ENCODE measurements at regions of chr14 and their contacts with region 1.

Region 1: DNA sequence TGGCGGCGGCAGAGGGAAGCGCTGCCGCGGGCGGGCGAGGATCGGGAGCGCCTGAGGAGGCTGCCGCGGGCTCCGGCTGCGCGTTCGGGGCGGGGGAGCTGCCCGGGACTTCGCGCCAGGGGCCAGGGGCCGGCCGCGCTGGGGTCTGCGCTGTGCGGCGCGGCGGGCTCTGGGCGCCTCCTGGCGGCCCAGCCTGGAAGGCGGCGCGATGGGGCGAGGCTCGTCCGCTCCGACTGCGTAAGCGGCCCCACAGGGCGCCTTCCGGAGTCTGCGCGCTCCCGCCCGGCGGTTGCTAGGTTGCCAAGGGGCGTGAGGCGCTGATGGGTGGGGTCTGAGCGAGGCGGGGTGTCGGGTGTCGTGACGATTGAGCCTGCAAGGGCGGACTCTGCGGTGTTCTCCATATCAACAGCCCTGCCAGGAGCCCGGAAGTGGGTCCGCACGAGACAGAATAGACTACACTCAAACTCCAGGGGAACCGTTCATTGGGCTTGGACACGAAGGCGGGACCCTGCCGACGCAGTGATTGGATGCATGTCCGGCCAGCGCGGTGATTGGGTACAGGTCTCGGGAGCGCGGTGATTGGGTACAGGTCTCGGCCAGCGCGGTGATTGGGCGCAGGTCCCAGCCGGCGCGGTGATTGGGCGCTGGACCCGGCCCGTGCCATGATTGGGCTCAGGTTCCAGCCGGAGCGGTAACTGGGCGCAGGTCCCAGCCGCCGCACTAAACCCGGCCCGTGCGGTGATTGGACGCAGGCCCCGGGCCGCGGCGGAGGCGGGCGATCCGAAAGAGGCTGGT is at the start of gene TEDC1:
- DNase-seq: peak; percentile 98 to 100 (median 98)
- ATAC-seq: peak; percentile 66
- H3K4me3 ChIP-seq: peak within 1 kb of the TSS; percentile 97
- H3K4me3 Mint-ChIP-seq: peak within 1 kb of the TSS; percentile 89
- H3K27ac ChIP-seq: peak within 1 kb of the TSS; percentile 88 to 95
- H3K27ac Mint-ChIP-seq: peak within 1 kb of the TSS; percentile 97
- H3K4me1 ChIP-seq: peaks cover 51% of the 10 kb centered on the region
- H3K4me1 Mint-ChIP-seq: peaks cover 21% of the 10 kb centered on the region
- H3K27me3 ChIP-seq: no peaks in the 10 kb centered on the region
- H3K27me3 Mint-ChIP-seq: no peaks in the 10 kb centered on the region
- CTCF ChIP-seq: peak; percentile 61
- total RNA-seq, gene TEDC1: 102 to 108 TPM

Region 2: GRCh38 chr14:104800015-104800770 is 690.6 kb before region 1 on chr14:
- CTCF ChIA-PET with region 1: no interaction called
- POLR2A ChIA-PET with region 1: interaction called, 4 read pairs
- intact Hi-C with region 1: loop called in 1 of 2 experiments (anchors 10 kb)
- DNase-seq: peak; percentile 59 to 94 (median 84)
- ATAC-seq: peak; percentile 63
- H3K4me3 ChIP-seq: peak overlapping the region; percentile 55
- H3K4me3 Mint-ChIP-seq: peak overlapping the region; percentile 79
- H3K27ac ChIP-seq: peak overlapping the region; percentile 50 to 82
- H3K27ac Mint-ChIP-seq: peak overlapping the region; percentile 71
- H3K4me1 ChIP-seq: peaks cover 55% of the 10 kb centered on the region
- H3K4me1 Mint-ChIP-seq: peaks cover 36% of the 10 kb centered on the region
- H3K27me3 ChIP-seq: no peaks in the 10 kb centered on the region
- H3K27me3 Mint-ChIP-seq: no peaks in the 10 kb centered on the region
- CTCF ChIP-seq: peak; percentile 10

Region 3: DNA sequence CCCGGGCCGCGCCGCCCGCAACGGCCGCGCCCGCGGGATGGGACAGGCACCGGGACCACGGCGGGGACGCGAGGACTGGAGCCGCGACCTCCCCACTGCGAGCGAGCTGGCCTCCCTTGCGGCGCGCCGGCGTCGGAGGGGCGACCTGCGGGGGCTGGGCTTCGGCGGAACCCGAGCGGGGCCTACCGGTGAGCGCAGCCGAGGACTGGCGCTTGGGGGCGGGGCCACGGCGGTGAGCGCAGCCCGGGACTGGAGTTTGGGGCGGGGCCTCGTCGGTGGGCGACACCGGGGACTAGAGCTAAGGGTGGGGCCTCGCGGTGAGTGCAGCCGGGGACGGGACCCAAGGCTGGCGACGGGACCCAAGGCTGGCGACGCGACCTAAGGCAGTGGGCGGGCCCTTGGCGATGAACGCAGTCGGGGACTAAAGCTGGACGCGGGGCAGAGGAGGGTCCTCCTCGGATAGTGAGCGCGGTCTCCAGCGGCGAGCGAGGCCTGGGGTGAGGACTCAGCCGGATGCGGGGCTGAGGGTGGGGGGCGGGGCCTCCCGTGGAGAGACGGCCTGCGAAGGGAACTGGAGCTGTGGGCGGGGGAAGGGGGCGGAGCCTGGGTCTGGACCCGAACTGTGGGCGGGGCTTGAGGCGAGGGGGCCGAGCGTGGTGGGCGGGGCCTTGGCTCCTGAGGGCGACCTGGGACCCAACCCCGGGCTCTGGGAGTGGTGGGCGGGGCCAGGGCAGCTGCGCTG is 189.8 kb before region 1 on chr14 and contains the start of gene BRF1:
- CTCF ChIA-PET with region 1: no interaction called
- POLR2A ChIA-PET with region 1: interaction called, 15 read pairs
- intact Hi-C with region 1: no loop called
- DNase-seq: peak; percentile 95 to 100 (median 98)
- ATAC-seq: peak; percentile 88
- H3K4me3 ChIP-seq: peak within 1 kb of the TSS; percentile 71
- H3K4me3 Mint-ChIP-seq: peak within 1 kb of the TSS; percentile 98
- H3K27ac ChIP-seq: peak within 1 kb of the TSS; percentile 79 to 88
- H3K27ac Mint-ChIP-seq: peak within 1 kb of the TSS; percentile 85
- H3K4me1 ChIP-seq: peaks cover 37% of the 10 kb centered on the region
- H3K4me1 Mint-ChIP-seq: peaks cover 46% of the 10 kb centered on the region
- H3K27me3 ChIP-seq: no peaks in the 10 kb centered on the region
- H3K27me3 Mint-ChIP-seq: no peaks in the 10 kb centered on the region
- CTCF ChIP-seq: no peak
- total RNA-seq, gene BRF1: 77.4 to 77.7 TPM

Region 4: GRCh38 chr14:105369653-105370040 is 121.1 kb before region 1 on chr14:
- CTCF ChIA-PET with region 1: interaction called, 40 read pairs
- POLR2A ChIA-PET with region 1: interaction called, 30 read pairs
- intact Hi-C with region 1: loop called in 1 of 2 experiments (anchors 1 kb)
- DNase-seq: no peak
- ATAC-seq: no peak
- H3K4me3 ChIP-seq: no peak overlapping the region
- H3K4me3 Mint-ChIP-seq: no peak overlapping the region
- H3K27ac ChIP-seq: no peak overlapping the region
- H3K27ac Mint-ChIP-seq: no peak overlapping the region
- H3K4me1 ChIP-seq: peaks cover 11% of the 10 kb centered on the region
- H3K4me1 Mint-ChIP-seq: peaks cover 6% of the 10 kb centered on the region
- H3K27me3 ChIP-seq: no peaks in the 10 kb centered on the region
- H3K27me3 Mint-ChIP-seq: no peaks in the 10 kb centered on the region
- CTCF ChIP-seq: no peak

Region 5: DNA sequence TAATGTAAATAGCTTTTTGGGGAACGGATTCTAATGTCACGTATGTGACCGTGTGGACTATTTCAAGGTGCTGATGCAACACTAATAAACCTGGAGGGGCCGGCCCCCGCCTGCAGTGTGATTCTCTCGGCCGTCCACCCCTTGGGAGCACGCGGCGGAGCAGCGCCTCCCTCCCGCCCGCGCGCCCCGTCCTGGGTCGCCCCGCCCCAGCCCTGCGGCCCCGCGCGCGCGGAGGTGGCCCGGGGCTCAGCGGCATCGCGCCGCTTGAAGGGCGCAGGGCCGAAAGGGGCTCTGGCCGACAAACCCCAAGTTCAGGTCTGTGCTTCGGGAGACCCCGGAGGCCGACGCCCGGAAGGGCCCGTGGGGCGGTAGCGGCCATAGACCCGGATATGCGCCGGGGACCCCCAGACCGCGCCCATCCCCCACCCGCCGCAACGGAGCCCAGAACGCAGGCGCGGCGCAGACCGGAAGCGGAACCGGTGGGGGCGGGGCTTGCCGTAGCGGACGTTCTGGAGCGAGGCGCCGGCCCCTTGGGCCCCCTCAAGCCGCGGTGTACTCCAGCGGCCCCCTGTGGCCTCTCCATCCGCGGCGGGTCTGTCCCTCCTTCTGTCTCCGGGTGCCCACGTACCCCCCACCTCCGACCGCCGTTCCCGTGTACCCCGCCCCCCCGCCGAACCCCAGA is 92.6 kb before region 1 on chr14 and contains the start of gene TEX22:
- CTCF ChIA-PET with region 1: interaction called, 5 read pairs
- POLR2A ChIA-PET with region 1: interaction called, 16 read pairs
- intact Hi-C with region 1: loop called in 1 of 2 experiments (anchors 5 kb)
- DNase-seq: peak; percentile 75 to 94 (median 86)
- ATAC-seq: peak; percentile 91
- H3K4me3 ChIP-seq: peak within 1 kb of the TSS; percentile 71
- H3K4me3 Mint-ChIP-seq: peak within 1 kb of the TSS; percentile 80
- H3K27ac ChIP-seq: peak within 1 kb of the TSS; percentile 44 to 65
- H3K27ac Mint-ChIP-seq: peak within 1 kb of the TSS; percentile 72
- H3K4me1 ChIP-seq: peaks cover 30% of the 10 kb centered on the region
- H3K4me1 Mint-ChIP-seq: peaks cover 16% of the 10 kb centered on the region
- H3K27me3 ChIP-seq: no peaks in the 10 kb centered on the region
- H3K27me3 Mint-ChIP-seq: no peaks in the 10 kb centered on the region
- CTCF ChIP-seq: no peak
- total RNA-seq, gene TEX22: 1.3 to 2.8 TPM

Region 6: GRCh38 chr14:105448706-105449111 is 42.1 kb before region 1 on chr14:
- CTCF ChIA-PET with region 1: interaction called, 29 read pairs
- POLR2A ChIA-PET with region 1: interaction called, 14 read pairs
- intact Hi-C with region 1: loop called (anchors 1 kb)
- DNase-seq: peak; percentile 55 to 82 (median 65)
- ATAC-seq: peak; percentile 100
- H3K4me3 ChIP-seq: no peak overlapping the region
- H3K4me3 Mint-ChIP-seq: no peak overlapping the region
- H3K27ac ChIP-seq: no peak overlapping the region
- H3K27ac Mint-ChIP-seq: no peak overlapping the region
- H3K4me1 ChIP-seq: peaks cover 7% of the 10 kb centered on the region
- H3K4me1 Mint-ChIP-seq: no peaks in the 10 kb centered on the region
- H3K27me3 ChIP-seq: no peaks in the 10 kb centered on the region
- H3K27me3 Mint-ChIP-seq: no peaks in the 10 kb centered on the region
- CTCF ChIP-seq: peak; percentile 75

Region 7: GRCh38 chr14:105527661-105528581 is 37.2 kb after region 1 on chr14:
- CTCF ChIA-PET with region 1: interaction called, 10 read pairs
- POLR2A ChIA-PET with region 1: interaction called, 10 read pairs
- intact Hi-C with region 1: loop called (anchors 1 to 2 kb)
- DNase-seq: peak; percentile 63 to 92 (median 77)
- ATAC-seq: peak; percentile 65
- H3K4me3 ChIP-seq: peak overlapping the region; percentile 47
- H3K4me3 Mint-ChIP-seq: peak overlapping the region; percentile 87
- H3K27ac ChIP-seq: no peak overlapping the region
- H3K27ac Mint-ChIP-seq: no peak overlapping the region
- H3K4me1 ChIP-seq: peaks cover 39% of the 10 kb centered on the region
- H3K4me1 Mint-ChIP-seq: peaks cover 17% of the 10 kb centered on the region
- H3K27me3 ChIP-seq: peaks cover 19 to 23% of the 10 kb centered on the region in 2 experiments
- H3K27me3 Mint-ChIP-seq: peaks cover 22% of the 10 kb centered on the region
- CTCF ChIP-seq: peak; percentile 69

Region 8: DNA sequence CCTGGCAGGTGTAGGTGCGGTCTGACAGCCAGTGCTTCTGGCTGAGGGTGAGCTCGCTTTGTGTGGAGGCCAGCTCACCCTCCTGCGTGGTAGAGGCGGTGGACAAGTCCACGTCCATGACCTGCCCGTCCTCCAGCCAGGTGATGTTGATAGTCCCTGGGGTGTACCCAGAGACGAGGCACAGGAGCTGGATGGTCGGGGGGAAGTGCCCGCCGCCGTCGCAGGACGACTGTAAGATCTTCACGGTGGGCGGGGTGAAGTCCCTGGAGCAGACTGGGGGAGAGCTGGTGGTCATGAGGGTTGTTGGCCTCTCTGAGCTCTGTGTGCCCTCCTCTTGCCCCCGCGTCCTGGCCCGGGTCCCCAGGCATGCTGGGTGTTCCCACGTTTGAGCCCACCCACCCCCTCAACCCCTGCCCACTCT is 110.2 kb after region 1 on chr14:
- CTCF ChIA-PET with region 1: no interaction called
- POLR2A ChIA-PET with region 1: no interaction called
- intact Hi-C with region 1: no loop called
- DNase-seq: peak in 1 of 14 experiments; percentile 11
- ATAC-seq: no peak
- H3K4me3 ChIP-seq: no peak overlapping the region
- H3K4me3 Mint-ChIP-seq: no peak overlapping the region
- H3K27ac ChIP-seq: no peak overlapping the region
- H3K27ac Mint-ChIP-seq: no peak overlapping the region
- H3K4me1 ChIP-seq: no peaks in the 10 kb centered on the region
- H3K4me1 Mint-ChIP-seq: no peaks in the 10 kb centered on the region
- H3K27me3 ChIP-seq: peaks cover 0 to 3% of the 10 kb centered on the region in 2 experiments
- H3K27me3 Mint-ChIP-seq: no peaks in the 10 kb centered on the region
- CTCF ChIP-seq: no peak

Region 9: DNA sequence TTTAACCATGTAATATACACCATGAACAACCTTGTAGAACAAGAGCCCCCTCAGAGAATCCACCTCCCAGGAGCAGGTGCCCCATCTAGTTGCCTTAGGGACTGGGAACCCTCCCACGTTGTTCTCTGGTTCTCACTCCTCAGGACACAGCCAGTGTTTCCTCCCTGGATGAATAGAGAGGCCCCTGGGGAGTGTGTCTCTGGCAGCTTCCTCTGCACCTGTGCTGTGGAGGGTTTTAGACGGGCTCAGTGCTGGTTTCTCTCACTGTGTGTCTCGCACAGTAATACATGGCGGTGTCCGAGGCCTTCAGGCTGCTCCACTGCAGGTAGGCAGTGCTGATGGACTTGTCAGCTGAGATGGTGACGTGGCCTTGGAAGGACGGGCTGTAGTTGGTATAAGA is 616.9 kb after region 1 on chr14:
- CTCF ChIA-PET with region 1: no interaction called
- POLR2A ChIA-PET with region 1: no interaction called
- intact Hi-C with region 1: no loop called
- DNase-seq: no peak
- ATAC-seq: no peak
- H3K4me3 ChIP-seq: no peak overlapping the region
- H3K4me3 Mint-ChIP-seq: no peak overlapping the region
- H3K27ac ChIP-seq: no peak overlapping the region
- H3K27ac Mint-ChIP-seq: no peak overlapping the region
- H3K4me1 ChIP-seq: no peaks in the 10 kb centered on the region
- H3K4me1 Mint-ChIP-seq: no peaks in the 10 kb centered on the region
- H3K27me3 ChIP-seq: peaks cover 0 to 20% of the 10 kb centered on the region in 2 experiments
- H3K27me3 Mint-ChIP-seq: peaks cover 20% of the 10 kb centered on the region
- CTCF ChIP-seq: no peak

Measured in CD4-positive, alpha-beta T cell (primary cell).